Heart left ventricle (tissue), 16 donors: ENCODE measurements at regions of chr13 and their contacts with region 1.

Region 1: GRCh38 chr13:30071969-30072817 is 221.8 kb upstream of the UBL3 start:
- DNase-seq: no peak
- ATAC-seq: no peak
- H3K4me3 ChIP-seq: no peak overlapping the region
- H3K27ac ChIP-seq: no peak overlapping the region
- H3K4me1 ChIP-seq: no peaks in the 10 kb centered on the region
- H3K27me3 ChIP-seq: peaks cover 0 to 3% (median 0%) of the 10 kb centered on the region in 9 donors
- CTCF ChIP-seq: no peak
- POLR2A ChIP-seq: no peak

Region 2: GRCh38 chr13:30049692-30050091 is 22.5 kb before region 1 on chr13:
- intact Hi-C with region 1: loop called in 1 of 10 experiments (anchors 1 kb)
- DNase-seq: peak in 2 of 5 donors; percentile 35 to 42
- ATAC-seq: peak in 2 of 4 donors; percentile 68 to 71
- H3K4me3 ChIP-seq: no peak overlapping the region
- H3K27ac ChIP-seq: no peak overlapping the region
- H3K4me1 ChIP-seq: no peaks in the 10 kb centered on the region
- H3K27me3 ChIP-seq: peaks cover 0 to 38% (median 0%) of the 10 kb centered on the region in 9 donors
- CTCF ChIP-seq: no peak
- POLR2A ChIP-seq: no peak